ENCODE measurements at regions of chr3 and their contacts with region 1.

Region 1: DNA sequence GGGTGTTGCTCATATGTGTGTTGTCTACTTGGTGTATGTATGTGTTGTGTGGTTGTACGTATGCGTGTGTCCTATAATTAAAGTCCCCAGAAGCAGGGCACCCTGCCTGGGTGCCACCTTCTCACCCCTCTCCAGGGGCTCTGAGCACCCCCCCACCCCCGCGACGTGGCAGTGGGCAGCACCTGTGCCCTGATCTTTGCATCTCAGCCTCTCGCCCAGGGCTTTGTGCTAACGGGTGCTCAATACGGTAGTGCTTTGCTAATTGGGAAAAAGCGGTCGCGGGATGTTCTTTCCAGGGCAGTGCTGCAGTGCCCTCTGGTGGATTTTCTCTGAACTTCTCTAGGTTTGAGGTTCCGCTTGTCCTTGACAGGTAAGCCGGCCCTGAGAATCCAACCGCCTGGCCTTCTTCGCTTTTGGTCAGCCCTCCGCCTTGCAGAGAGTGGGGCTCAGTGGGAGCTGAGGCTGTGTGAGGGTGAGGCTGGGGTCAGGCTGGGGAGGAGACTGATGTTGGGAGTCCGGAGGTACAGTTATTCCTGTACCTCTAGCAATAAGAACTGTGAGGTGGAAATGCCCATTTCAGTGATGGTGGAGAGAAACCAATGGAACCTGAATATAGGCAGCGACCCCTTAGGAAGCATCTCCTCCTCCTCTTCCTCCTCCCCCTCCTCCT is 17.6 kb upstream of the EPHB3 start:
- DNase-seq: peak; percentile 54 to 83 (median 74)
- ATAC-seq: peak; percentile 81
- H3K4me3 ChIP-seq: no peak overlapping the region
- H3K4me3 Mint-ChIP-seq: no peak overlapping the region
- H3K27ac ChIP-seq: no peak overlapping the region
- H3K27ac Mint-ChIP-seq: no peak overlapping the region
- H3K4me1 ChIP-seq: peaks cover 9% of the 10 kb centered on the region
- H3K4me1 Mint-ChIP-seq: peaks cover 13% of the 10 kb centered on the region
- H3K27me3 ChIP-seq: peaks cover 0 to 5% of the 10 kb centered on the region in 2 experiments
- H3K27me3 Mint-ChIP-seq: peaks cover 30% of the 10 kb centered on the region
- CTCF ChIP-seq: peak; percentile 87

Region 2: DNA sequence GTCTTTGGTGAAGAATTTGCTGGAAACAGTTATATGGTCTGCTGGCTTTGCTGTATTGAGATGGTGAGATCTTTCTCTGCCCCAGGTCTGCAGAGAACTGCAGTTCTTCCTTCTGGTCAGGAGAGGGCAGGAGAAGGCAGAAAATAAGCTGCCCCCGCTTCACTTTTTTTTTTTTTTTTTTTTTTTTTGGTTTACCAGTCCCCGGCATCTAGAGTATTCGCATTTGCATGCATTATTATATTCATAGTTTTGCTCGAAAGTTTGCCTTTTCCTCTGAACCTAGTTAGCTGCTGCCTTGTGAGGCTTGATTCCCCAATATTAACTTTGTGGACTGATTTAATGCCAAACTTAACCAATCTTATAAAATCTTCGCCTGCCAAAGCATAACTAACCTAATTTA is 648.7 kb before region 1 on chr3:
- CTCF ChIA-PET with region 1: interaction called, 6 read pairs
- POLR2A ChIA-PET with region 1: no interaction called
- intact Hi-C with region 1: loop called (anchors 1 to 10 kb)
- DNase-seq: peak in 7 of 9 experiments; percentile 24 to 72 (median 39)
- ATAC-seq: peak; percentile 97
- H3K4me3 ChIP-seq: no peak overlapping the region
- H3K4me3 Mint-ChIP-seq: no peak overlapping the region
- H3K27ac ChIP-seq: no peak overlapping the region
- H3K27ac Mint-ChIP-seq: no peak overlapping the region
- H3K4me1 ChIP-seq: no peaks in the 10 kb centered on the region
- H3K4me1 Mint-ChIP-seq: no peaks in the 10 kb centered on the region
- H3K27me3 ChIP-seq: no peaks in the 10 kb centered on the region
- H3K27me3 Mint-ChIP-seq: peaks cover 29% of the 10 kb centered on the region
- CTCF ChIP-seq: peak; percentile 70

Region 3: DNA sequence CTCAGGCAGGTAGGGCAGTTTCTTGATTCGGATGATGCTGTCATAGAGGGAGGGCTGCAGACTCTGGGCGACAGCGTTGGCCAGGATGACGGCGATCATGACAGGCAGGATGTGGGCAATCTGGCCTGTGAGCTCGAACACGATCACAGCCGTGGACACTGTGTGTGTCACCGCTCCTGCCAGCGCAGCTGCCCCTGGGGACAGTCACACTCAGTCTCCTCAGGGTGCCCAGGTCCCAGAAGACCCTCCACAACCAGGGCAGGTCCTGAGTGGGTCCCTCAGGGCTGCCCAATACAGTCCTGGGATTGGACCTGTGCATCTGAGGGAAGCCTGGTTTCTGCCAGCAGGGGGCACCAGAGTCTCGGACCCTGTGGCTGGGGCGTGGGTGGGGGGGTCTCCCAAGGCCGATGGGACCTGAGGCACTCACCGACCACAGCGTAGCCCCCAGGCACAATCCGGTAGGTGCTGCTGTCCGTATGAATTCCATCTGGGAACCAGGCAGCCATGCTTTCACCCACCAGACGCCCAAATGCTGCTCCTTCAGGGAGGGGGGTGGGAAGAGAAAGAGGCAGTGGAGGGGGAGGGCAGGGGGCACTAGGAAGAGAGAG is 189.8 kb before region 1 on chr3:
- CTCF ChIA-PET with region 1: interaction called, 43 read pairs
- POLR2A ChIA-PET with region 1: no interaction called
- intact Hi-C with region 1: loop called in 1 of 2 experiments (anchors 1 kb)
- DNase-seq: peak in 8 of 9 experiments; percentile 48 to 79 (median 70)
- ATAC-seq: peak; percentile 81
- H3K4me3 ChIP-seq: no peak overlapping the region
- H3K4me3 Mint-ChIP-seq: no peak overlapping the region
- H3K27ac ChIP-seq: no peak overlapping the region
- H3K27ac Mint-ChIP-seq: no peak overlapping the region
- H3K4me1 ChIP-seq: peaks cover 7% of the 10 kb centered on the region
- H3K4me1 Mint-ChIP-seq: peaks cover 3% of the 10 kb centered on the region
- H3K27me3 ChIP-seq: no peaks in the 10 kb centered on the region
- H3K27me3 Mint-ChIP-seq: no peaks in the 10 kb centered on the region
- CTCF ChIP-seq: peak; percentile 57

Region 4: GRCh38 chr3:184417619-184418327 is 126.2 kb before region 1 on chr3:
- CTCF ChIA-PET with region 1: interaction called, 35 read pairs
- POLR2A ChIA-PET with region 1: no interaction called
- intact Hi-C with region 1: loop called in 1 of 2 experiments (anchors 1 kb)
- DNase-seq: peak; percentile 31 to 80 (median 72)
- ATAC-seq: peak; percentile 97
- H3K4me3 ChIP-seq: no peak overlapping the region
- H3K4me3 Mint-ChIP-seq: no peak overlapping the region
- H3K27ac ChIP-seq: no peak overlapping the region
- H3K27ac Mint-ChIP-seq: no peak overlapping the region
- H3K4me1 ChIP-seq: no peaks in the 10 kb centered on the region
- H3K4me1 Mint-ChIP-seq: no peaks in the 10 kb centered on the region
- H3K27me3 ChIP-seq: no peaks in the 10 kb centered on the region
- H3K27me3 Mint-ChIP-seq: peaks cover 1% of the 10 kb centered on the region
- CTCF ChIP-seq: peak; percentile 68

Region 5: GRCh38 chr3:184513276-184514170 is 30.5 kb before region 1 on chr3:
- CTCF ChIA-PET with region 1: interaction called, 36 read pairs
- POLR2A ChIA-PET with region 1: no interaction called
- intact Hi-C with region 1: loop called in 1 of 2 experiments (anchors 1 kb)
- DNase-seq: peak; percentile 67 to 89 (median 83)
- ATAC-seq: peak; percentile 99
- H3K4me3 ChIP-seq: peak overlapping the region; percentile 37 to 38
- H3K4me3 Mint-ChIP-seq: peak overlapping the region; percentile 52
- H3K27ac ChIP-seq: no peak overlapping the region
- H3K27ac Mint-ChIP-seq: no peak overlapping the region
- H3K4me1 ChIP-seq: peaks cover 11% of the 10 kb centered on the region
- H3K4me1 Mint-ChIP-seq: peaks cover 8% of the 10 kb centered on the region
- H3K27me3 ChIP-seq: peaks cover 8 to 15% of the 10 kb centered on the region in 2 experiments
- H3K27me3 Mint-ChIP-seq: peaks cover 57% of the 10 kb centered on the region
- CTCF ChIP-seq: peak; percentile 84

Region 6: GRCh38 chr3:184531626-184532280 is 12.2 kb before region 1 on chr3:
- CTCF ChIA-PET with region 1: interaction called, 40 read pairs
- POLR2A ChIA-PET with region 1: interaction called, 3 read pairs
- intact Hi-C with region 1: no loop called
- DNase-seq: peak in 1 of 9 experiments; percentile 25
- ATAC-seq: no peak
- H3K4me3 ChIP-seq: no peak overlapping the region
- H3K4me3 Mint-ChIP-seq: no peak overlapping the region
- H3K27ac ChIP-seq: no peak overlapping the region
- H3K27ac Mint-ChIP-seq: no peak overlapping the region
- H3K4me1 ChIP-seq: no peaks in the 10 kb centered on the region
- H3K4me1 Mint-ChIP-seq: no peaks in the 10 kb centered on the region
- H3K27me3 ChIP-seq: peaks cover 0 to 4% of the 10 kb centered on the region in 2 experiments
- H3K27me3 Mint-ChIP-seq: peaks cover 31% of the 10 kb centered on the region
- CTCF ChIP-seq: no peak

Region 7: GRCh38 chr3:184777336-184778004 is 233.5 kb after region 1 on chr3:
- CTCF ChIA-PET with region 1: interaction called, 15 read pairs
- POLR2A ChIA-PET with region 1: no interaction called
- intact Hi-C with region 1: loop called in 1 of 2 experiments (anchors 1 kb)
- DNase-seq: peak; percentile 63 to 91 (median 84)
- ATAC-seq: peak; percentile 98
- H3K4me3 ChIP-seq: no peak overlapping the region
- H3K4me3 Mint-ChIP-seq: no peak overlapping the region
- H3K27ac ChIP-seq: no peak overlapping the region
- H3K27ac Mint-ChIP-seq: no peak overlapping the region
- H3K4me1 ChIP-seq: no peaks in the 10 kb centered on the region
- H3K4me1 Mint-ChIP-seq: no peaks in the 10 kb centered on the region
- H3K27me3 ChIP-seq: peaks cover 0 to 2% of the 10 kb centered on the region in 2 experiments
- H3K27me3 Mint-ChIP-seq: peaks cover 22% of the 10 kb centered on the region
- CTCF ChIP-seq: peak; percentile 94

Measured in CD8-positive, alpha-beta T cell (primary cell).